Mammary epithelial cell (primary cell): ENCODE measurements at regions of chr18 and their contacts with region 1.

Region 1: DNA sequence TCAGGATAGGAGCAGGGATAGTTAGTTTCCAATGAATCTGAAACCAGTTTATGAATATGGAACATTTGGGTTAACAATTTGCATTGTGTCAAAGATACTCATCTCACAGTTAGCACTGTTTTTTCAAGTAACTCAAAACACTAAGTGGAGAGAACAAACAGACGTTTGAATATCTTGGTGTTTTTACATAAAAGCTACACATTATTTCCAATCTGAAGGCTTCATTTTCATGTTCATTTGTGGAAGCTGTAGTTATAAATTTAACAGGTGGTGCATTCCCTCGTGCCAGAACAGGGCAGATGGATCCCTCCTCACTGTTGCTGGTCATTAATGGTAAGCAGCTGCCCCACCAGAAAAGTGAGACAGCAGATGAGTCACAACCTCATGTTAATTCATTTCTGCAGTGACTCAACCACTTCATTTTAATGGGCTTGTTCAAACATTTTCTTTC is 286.9 kb downstream of the TMX3 start:
- DNase-seq: peak; percentile 92
- H3K4me3 ChIP-seq: no peak overlapping the region
- H3K27ac ChIP-seq: peak overlapping the region; percentile 77
- H3K4me1 ChIP-seq: peaks cover 52% of the 10 kb centered on the region
- H3K27me3 ChIP-seq: no peaks in the 10 kb centered on the region
- CTCF ChIP-seq: no peak

Region 2: DNA sequence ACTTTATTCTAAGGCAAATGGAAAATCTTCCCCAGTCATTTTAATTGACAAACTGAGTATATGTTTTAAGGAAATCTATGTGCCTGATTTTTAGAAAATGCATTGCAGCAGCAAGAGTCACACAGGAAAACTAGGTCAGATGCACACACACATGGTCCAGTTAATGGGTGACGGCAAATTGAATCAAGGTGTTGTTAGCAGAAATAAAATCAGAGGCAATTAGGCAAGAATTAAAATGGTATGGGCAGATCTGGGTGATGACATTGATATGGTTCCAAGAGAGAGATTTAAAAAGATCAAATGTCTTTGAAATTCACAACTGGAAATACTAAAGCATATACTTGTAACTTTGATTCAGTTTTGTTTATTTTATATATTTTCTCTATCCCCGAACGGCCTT is 1649.9 kb before region 1 on chr18:
- CTCF ChIA-PET with region 1: no interaction called
- dilution Hi-C with region 1: no loop called
- in situ Hi-C with region 1: no loop called
- intact Hi-C with region 1: no loop called
- DNase-seq: no peak
- H3K4me3 ChIP-seq: no peak overlapping the region
- H3K27ac ChIP-seq: no peak overlapping the region
- H3K4me1 ChIP-seq: no peaks in the 10 kb centered on the region
- H3K27me3 ChIP-seq: no peaks in the 10 kb centered on the region
- CTCF ChIP-seq: no peak

Region 3: DNA sequence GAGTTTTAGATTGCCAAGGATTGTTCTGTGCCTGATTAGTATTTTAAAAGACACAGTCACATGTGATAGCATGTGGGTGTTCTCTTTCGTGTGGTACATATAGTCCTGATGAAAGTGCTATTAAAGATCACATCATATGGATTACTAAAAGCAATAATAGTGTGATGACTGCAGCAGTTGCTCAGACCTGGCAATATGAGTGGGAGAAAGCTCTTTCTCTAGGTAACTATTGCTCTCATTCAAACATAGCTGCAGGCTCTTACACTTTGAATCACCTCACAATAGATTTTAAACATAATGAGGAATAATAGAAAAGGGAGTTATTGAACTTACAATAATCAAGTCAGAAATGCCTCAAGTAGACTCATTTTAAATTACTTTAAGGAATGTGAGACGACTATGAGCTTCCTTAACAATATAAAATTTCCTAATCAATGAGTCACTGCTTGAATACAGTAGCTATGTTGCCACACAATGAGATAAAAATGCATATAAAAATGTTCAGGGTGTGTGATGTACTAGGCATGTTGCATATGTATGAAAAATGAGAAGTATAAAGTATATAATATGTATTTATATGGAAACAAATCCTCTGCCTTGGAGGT is 165.2 kb before region 1 on chr18:
- CTCF ChIA-PET with region 1: no interaction called
- dilution Hi-C with region 1: no loop called
- in situ Hi-C with region 1: no loop called
- intact Hi-C with region 1: loop called (anchors 5 kb)
- DNase-seq: peak; percentile 83
- H3K4me3 ChIP-seq: peak overlapping the region in 2 of 3 experiments; percentile 10 to 16
- H3K27ac ChIP-seq: peak overlapping the region; percentile 98
- H3K4me1 ChIP-seq: peaks cover 29% of the 10 kb centered on the region
- H3K27me3 ChIP-seq: no peaks in the 10 kb centered on the region
- CTCF ChIP-seq: no peak